Activated T-helper 2 cell treated with anti-CD3 and anti-CD28 coated beads, Interferon-gamma antibody, Interleukin-2, Interleukin-4, amounts not matched to agents 10 μg/mL and 5 μg/mL and 100 μg/mL, durations not matched to agents 14 hours and 24 hours and 36 hours (primary cell): ENCODE measurements at regions of chr1 and their contacts with region 1.

Region 1: DNA sequence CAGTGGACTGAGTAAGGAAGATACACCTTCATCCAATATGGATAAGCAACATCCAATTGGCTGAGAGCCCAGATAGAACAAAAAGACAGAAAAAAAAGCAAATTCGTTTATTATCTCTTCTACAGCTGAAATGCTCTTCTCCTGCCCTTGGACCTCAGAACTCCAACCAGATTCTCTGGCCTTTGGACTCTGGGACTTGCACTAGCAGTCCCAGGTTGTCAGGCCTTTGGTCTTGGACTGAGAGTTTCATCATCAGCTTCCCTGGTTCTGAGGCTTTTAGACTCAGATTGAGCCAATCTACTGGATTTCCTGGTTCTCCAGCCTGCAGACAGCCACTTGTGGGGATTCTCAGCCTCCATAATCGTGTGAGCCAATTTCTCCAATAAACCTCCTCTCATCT is 926.8 kb downstream of the PLA2G4A start:
- DNase-seq: no peak
- H3K4me3 Mint-ChIP-seq: no peak overlapping the region
- H3K27ac Mint-ChIP-seq: no peak overlapping the region
- H3K4me1 Mint-ChIP-seq: no peaks in the 10 kb centered on the region
- H3K27me3 Mint-ChIP-seq: no peaks in the 10 kb centered on the region

Region 2: DNA sequence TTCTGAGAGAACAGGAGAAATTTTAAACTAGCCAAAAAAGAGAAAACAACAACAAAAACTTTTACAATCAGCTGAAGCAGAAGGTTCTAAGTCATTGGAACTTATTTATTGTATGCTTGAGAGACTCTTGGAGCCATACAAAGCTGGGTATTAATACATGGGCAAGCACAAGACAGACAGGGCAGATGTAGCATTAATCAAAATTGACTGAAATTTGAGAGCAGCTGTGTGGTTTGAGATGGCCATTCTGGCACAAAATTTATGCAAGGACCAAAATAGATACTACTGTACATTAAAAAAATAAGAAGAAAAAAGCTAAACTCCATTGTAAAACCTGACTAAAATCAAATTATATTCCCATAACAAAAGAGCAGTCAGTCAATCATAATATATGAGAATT is 34.3 kb before region 1 on chr1:
- intact Hi-C with region 1: no loop called
- DNase-seq: no peak
- H3K4me3 Mint-ChIP-seq: no peak overlapping the region
- H3K27ac Mint-ChIP-seq: no peak overlapping the region
- H3K4me1 Mint-ChIP-seq: no peaks in the 10 kb centered on the region
- H3K27me3 Mint-ChIP-seq: no peaks in the 10 kb centered on the region

Region 3: GRCh38 chr1:187744665-187745064 is 10.9 kb before region 1 on chr1:
- intact Hi-C with region 1: loop called (anchors 1 kb)
- DNase-seq: no peak
- H3K4me3 Mint-ChIP-seq: no peak overlapping the region
- H3K27ac Mint-ChIP-seq: no peak overlapping the region
- H3K4me1 Mint-ChIP-seq: no peaks in the 10 kb centered on the region
- H3K27me3 Mint-ChIP-seq: no peaks in the 10 kb centered on the region